Mammary epithelial cell (primary cell): ENCODE measurements at regions of chr13 and their contacts with region 1.

Region 1: GRCh38 chr13:59898066-59898465 is 265.7 kb downstream of the DIAPH3 start:
- DNase-seq: no peak
- H3K4me3 ChIP-seq: no peak overlapping the region
- H3K27ac ChIP-seq: no peak overlapping the region
- H3K4me1 ChIP-seq: no peaks in the 10 kb centered on the region
- H3K27me3 ChIP-seq: no peaks in the 10 kb centered on the region
- CTCF ChIP-seq: no peak

Region 2: DNA sequence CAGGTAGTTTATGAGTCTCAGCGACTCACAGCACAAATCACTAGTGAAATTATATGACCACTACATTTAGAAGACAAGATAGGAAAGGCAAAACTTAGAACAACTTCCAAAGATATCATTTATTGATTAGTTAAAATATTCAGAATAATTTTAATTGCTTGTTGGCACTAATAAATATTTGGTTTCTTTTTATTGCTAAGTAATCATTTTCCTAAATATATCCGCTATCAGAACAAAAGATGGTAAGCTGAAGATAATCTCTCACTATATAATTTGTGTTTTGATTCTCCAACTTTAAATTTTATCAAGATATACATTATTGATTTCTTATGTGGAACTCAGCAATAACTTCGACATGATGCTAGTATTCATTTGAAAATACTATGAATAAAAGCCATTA is 17.2 kb after region 1 on chr13:
- CTCF ChIA-PET with region 1: interaction called, 20 read pairs
- dilution Hi-C with region 1: no loop called
- in situ Hi-C with region 1: no loop called
- intact Hi-C with region 1: no loop called
- DNase-seq: no peak
- H3K4me3 ChIP-seq: no peak overlapping the region
- H3K27ac ChIP-seq: no peak overlapping the region
- H3K4me1 ChIP-seq: no peaks in the 10 kb centered on the region
- H3K27me3 ChIP-seq: no peaks in the 10 kb centered on the region
- CTCF ChIP-seq: no peak